ENCODE measurements at regions of chr6 and their contacts with region 1.

Region 1: DNA sequence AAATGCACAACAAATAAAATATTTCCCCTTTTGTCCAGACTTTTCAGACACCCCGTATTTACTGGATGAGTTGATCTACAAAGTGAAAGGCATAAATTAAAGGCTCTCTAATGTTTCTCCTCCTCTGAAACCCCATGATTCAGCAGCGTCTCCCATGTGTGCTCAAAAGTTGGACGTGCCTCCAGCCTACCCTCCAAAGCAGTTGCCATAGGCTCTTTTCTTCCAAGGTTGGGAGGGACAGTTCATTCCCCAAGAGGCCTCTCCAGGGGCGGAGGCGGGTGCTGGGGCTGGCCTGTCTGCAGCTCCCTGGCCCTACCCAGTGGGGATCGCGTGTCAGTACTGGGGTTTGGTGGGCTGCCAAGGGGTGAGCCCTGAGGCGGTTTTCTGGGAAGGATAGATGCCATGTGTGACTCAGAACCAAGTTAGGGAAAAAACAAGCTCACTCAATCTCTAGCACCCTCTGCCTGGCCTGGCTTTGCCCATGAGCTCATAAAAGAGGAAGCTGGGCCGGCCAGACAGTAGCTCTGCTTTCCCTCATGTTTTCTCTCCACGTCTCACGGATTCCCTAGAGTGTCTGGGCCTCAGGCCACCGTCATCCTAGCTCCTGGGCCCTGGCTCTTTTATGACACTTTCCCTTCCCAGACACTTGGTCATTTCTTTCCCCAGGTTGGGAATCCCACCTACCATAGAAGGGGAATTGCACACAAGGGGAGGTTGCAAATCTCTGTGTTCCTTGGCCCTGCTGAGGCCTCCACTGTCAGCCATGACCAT is 8.0 kb upstream of the IER3 start:
- DNase-seq: peak; percentile 95

Region 2: GRCh38 chr6:30781743-30782424 is 29.5 kb after region 1 on chr6:
- intact Hi-C with region 1: loop called (anchors 2 kb)
- DNase-seq: peak; percentile 96